H1 (cell line): ENCODE measurements at regions of chr1 and their contacts with region 1.

Region 1: GRCh38 chr1:44780583-44781121 is 5.3 kb downstream of the RPS8 start:
- DNase-seq: no peak
- H3K4me3 ChIP-seq: no peak overlapping the region
- H3K27ac ChIP-seq: no peak overlapping the region
- H3K4me1 ChIP-seq: peaks cover 0 to 18% (median 9%) of the 10 kb centered on the region in 4 experiments; a peak in 6 of 7 replicates
- H3K27me3 ChIP-seq: peaks cover 0 to 3% (median 0%) of the 10 kb centered on the region in 4 experiments; a peak in 3 of 7 replicates
- CTCF ChIP-seq: no peak
- EP300 ChIP-seq: no peak
- POLR2A ChIP-seq: peak in 1 of 2 experiments; percentile 65; a peak in 2 of 3 replicates
- RAD21 ChIP-seq: no peak

Region 2: GRCh38 chr1:44757420-44757819 is 23.2 kb before region 1 on chr1:
- CTCF ChIA-PET with region 1: interaction called, 4 read pairs
- POLR2A ChIA-PET with region 1: interaction called, 151 read pairs
- DNase-seq: no peak
- H3K4me3 ChIP-seq: no peak overlapping the region
- H3K27ac ChIP-seq: no peak overlapping the region
- H3K4me1 ChIP-seq: no peaks in the 10 kb centered on the region
- H3K27me3 ChIP-seq: no peaks in the 10 kb centered on the region
- CTCF ChIP-seq: no peak
- EP300 ChIP-seq: no peak
- POLR2A ChIP-seq: no peak
- RAD21 ChIP-seq: no peak

Region 3: DNA sequence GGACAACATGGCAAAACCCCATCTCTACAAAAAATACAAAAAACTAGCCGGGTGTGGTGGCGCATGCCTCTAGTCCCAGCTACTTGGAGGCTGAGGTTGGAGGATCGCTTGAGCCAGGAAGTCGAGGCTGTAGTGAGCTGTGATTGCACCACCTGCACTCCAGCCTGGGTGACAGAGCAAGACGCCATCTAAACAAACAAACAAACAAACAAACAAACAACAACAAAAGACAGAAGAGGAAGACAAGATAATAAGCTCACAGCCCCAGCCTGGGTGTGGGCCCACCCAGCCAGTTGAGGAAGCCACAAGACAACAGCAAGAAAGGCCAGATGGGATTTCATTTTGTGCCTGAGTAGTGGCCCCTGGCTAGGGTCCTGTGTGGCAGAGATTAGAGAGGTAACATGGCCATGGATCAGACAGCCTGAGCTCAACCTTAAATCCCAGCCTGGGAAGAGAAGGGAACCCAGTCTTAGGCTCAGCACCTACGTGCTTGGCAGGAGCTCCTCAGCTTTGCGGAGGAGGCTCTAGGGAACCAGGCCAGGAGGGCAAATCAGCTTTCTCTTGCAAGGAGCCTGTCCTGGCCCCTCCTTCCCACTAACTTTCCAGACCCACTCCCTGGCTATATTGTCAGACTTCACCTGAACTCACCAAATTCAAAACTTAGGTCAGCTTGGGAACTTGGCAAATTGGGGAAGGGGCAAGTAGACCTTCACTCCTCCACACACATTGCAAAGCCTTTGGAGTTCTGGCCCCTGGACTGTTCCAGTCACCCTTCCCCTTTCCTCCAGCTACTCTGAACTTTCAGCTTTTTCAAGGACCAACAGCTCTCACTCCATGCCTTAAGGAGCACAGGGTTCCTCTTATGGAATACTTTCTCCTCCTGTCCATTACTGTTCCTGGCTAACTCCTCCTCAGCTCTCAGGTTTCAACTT is 12.4 kb after region 1 on chr1:
- CTCF ChIA-PET with region 1: interaction called, 21 read pairs
- POLR2A ChIA-PET with region 1: interaction called, 310 read pairs
- DNase-seq: no peak
- H3K4me3 ChIP-seq: no peak overlapping the region
- H3K27ac ChIP-seq: no peak overlapping the region; the same call in 1 of the 2 replicates
- H3K4me1 ChIP-seq: peaks cover 0 to 5% (median 5%) of the 10 kb centered on the region in 4 experiments
- H3K27me3 ChIP-seq: no peaks in the 10 kb centered on the region
- CTCF ChIP-seq: no peak
- EP300 ChIP-seq: no peak
- POLR2A ChIP-seq: no peak
- RAD21 ChIP-seq: no peak

Region 4: DNA sequence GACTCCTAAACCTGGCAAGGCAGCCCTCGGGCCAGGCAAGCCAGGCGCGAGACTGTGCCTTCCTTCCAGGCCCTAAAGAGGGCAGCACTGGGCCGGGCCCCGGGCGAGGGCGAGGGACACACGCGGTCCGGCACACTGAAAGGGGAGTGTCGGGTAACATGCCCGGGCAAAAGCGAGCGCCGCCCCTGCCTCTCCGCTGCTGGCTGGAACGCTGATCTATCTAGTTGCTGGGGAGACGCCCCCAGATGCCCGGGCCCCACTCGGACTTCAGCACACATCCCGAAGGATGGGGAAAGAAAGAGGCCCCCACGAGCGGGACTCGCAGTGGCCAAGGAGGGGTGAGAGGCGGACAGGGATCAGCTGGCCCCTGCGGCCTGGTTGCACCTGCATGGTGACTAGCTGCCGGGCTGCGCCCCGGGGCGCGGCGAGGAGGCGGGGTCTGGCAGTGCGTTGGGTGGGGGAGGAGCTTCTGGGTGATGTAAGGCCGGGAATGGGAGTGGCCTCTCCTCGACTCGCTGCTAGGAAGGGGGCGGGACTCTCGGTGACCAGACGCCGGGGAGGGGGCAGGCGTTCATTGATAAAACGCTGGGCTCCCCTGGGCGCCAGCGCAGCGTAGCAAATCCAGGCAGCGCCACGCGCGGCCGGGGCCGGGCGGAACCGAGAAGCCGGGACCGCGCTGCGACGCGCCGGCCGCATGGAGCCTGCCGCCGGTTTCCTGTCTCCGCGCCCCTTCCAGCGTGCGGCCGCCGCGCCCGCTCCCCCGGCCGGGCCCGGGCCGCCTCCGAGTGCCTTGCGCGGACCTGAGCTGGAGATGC is 19.3 kb after region 1 on chr1 and contains the start of gene PLK3:
- CTCF ChIA-PET with region 1: interaction called, 33 read pairs
- POLR2A ChIA-PET with region 1: interaction called, 61 read pairs
- DNase-seq: peak; percentile 93 to 98
- H3K4me3 ChIP-seq: peak within 1 kb of the TSS; percentile 60 to 76 (median 66)
- H3K27ac ChIP-seq: peak within 1 kb of the TSS; percentile 91
- H3K4me1 ChIP-seq: peaks cover 0 to 5% (median 2%) of the 10 kb centered on the region in 4 experiments; a peak in 3 of 7 replicates
- H3K27me3 ChIP-seq: peaks cover 0 to 5% (median 0%) of the 10 kb centered on the region in 4 experiments; a peak in 2 of 7 replicates
- CTCF ChIP-seq: peak in 2 of 3 experiments; percentile 89 to 97; a peak in 3 of 4 replicates
- EP300 ChIP-seq: no peak
- POLR2A ChIP-seq: peak in 1 of 2 experiments; percentile 98; a peak in 2 of 3 replicates
- RAD21 ChIP-seq: peak; percentile 71 to 79
- total RNA-seq, gene PLK3: 7.9 and 9.7 TPM in 2 replicates

Region 5: DNA sequence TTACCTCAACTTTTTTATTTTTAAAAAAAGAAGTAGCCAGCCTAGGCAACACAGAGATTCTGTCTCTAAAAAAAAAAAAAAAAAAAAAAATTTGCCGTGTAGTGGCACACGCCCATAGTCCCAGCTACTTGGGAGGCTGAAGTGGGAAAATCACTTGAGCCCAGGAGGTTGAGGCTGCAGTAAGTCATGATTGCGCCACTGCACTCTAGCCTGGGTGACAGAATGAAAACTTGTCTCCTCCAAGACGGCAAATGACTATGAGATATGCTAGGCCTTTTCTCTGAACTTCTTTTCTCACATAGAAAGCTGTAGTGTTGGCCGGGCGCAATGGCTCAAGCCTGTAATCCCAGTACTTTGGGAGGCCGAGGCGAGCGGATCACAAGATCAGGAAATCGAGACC is 87.1 kb after region 1 on chr1:
- CTCF ChIA-PET with region 1: no interaction called
- POLR2A ChIA-PET with region 1: no interaction called
- DNase-seq: no peak
- H3K4me3 ChIP-seq: no peak overlapping the region
- H3K27ac ChIP-seq: no peak overlapping the region
- H3K4me1 ChIP-seq: no peaks in the 10 kb centered on the region
- H3K27me3 ChIP-seq: no peaks in the 10 kb centered on the region
- CTCF ChIP-seq: no peak
- EP300 ChIP-seq: no peak
- POLR2A ChIP-seq: no peak
- RAD21 ChIP-seq: no peak

Region 6: DNA sequence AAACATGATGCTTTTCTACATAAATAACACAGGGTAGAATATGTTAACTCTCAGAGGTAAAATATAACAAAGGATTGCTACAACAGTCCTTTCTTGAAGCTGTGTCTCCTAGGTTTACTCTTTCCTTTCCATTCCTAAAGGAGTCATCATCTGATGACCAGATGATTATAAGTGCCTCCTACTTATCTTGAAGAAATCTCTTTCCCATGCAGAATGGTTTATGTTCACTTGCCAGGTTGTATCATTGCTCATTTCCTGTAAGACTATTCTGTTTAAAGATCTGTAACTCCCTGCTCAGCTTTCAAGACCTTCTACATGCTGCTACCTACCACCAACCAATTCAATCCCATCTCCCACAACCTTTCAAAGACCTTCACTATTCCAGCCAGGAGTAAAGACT is 113.9 kb after region 1 on chr1:
- CTCF ChIA-PET with region 1: no interaction called
- POLR2A ChIA-PET with region 1: no interaction called
- DNase-seq: no peak
- H3K4me3 ChIP-seq: no peak overlapping the region
- H3K27ac ChIP-seq: no peak overlapping the region
- H3K4me1 ChIP-seq: no peaks in the 10 kb centered on the region
- H3K27me3 ChIP-seq: no peaks in the 10 kb centered on the region
- CTCF ChIP-seq: no peak
- EP300 ChIP-seq: no peak
- POLR2A ChIP-seq: no peak
- RAD21 ChIP-seq: no peak